ENCODE measurements at regions of chr13 and their contacts with region 1.

Region 1: GRCh38 chr13:29771247-29771646 is 79.2 kb downstream of the UBL3 start:
- DNase-seq: peak; percentile 49
- H3K4me3 ChIP-seq: no peak overlapping the region
- H3K27ac ChIP-seq: no peak overlapping the region
- H3K4me1 ChIP-seq: no peaks in the 10 kb centered on the region
- H3K27me3 ChIP-seq: no peaks in the 10 kb centered on the region
- CTCF ChIP-seq: peak; percentile 60

Region 2: GRCh38 chr13:29923554-29924481 is 152.6 kb after region 1 on chr13:
- CTCF ChIA-PET with region 1: no interaction called
- POLR2A ChIA-PET with region 1: interaction called, 3 read pairs
- intact Hi-C with region 1: loop called (anchors 10 kb)
- DNase-seq: peak; percentile 60
- H3K4me3 ChIP-seq: no peak overlapping the region
- H3K27ac ChIP-seq: no peak overlapping the region
- H3K4me1 ChIP-seq: peaks cover 4% of the 10 kb centered on the region
- H3K27me3 ChIP-seq: no peaks in the 10 kb centered on the region
- CTCF ChIP-seq: peak; percentile 87

Region 3: GRCh38 chr13:30088312-30088855 is 317.1 kb after region 1 on chr13:
- CTCF ChIA-PET with region 1: no interaction called
- POLR2A ChIA-PET with region 1: interaction called, 12 read pairs
- intact Hi-C with region 1: no loop called
- DNase-seq: no peak
- H3K4me3 ChIP-seq: no peak overlapping the region
- H3K27ac ChIP-seq: no peak overlapping the region
- H3K4me1 ChIP-seq: no peaks in the 10 kb centered on the region
- H3K27me3 ChIP-seq: no peaks in the 10 kb centered on the region
- CTCF ChIP-seq: no peak